ENCODE measurements at regions of chr7 and their contacts with region 1.

Region 1: GRCh38 chr7:37495574-37496184 is 47.0 kb upstream of the ELMO1 start:
- DNase-seq: no peak
- H3K4me3 ChIP-seq: no peak overlapping the region
- H3K27ac ChIP-seq: no peak overlapping the region
- H3K4me1 ChIP-seq: peaks cover 0 to 2% (median 0%) of the 10 kb centered on the region in 4 experiments; a peak in 3 of 7 replicates
- H3K27me3 ChIP-seq: no peaks in the 10 kb centered on the region
- CTCF ChIP-seq: peak in 2 of 3 experiments; percentile 29 to 49; a peak in 2 of 4 replicates
- EP300 ChIP-seq: no peak
- POLR2A ChIP-seq: no peak
- RAD21 ChIP-seq: peak; percentile 27 to 36; a peak in 2 of 4 replicates

Region 2: GRCh38 chr7:37255327-37255944 is 240.2 kb before region 1 on chr7:
- CTCF ChIA-PET with region 1: interaction called, 13 read pairs
- POLR2A ChIA-PET with region 1: no interaction called
- DNase-seq: no peak
- H3K4me3 ChIP-seq: no peak overlapping the region
- H3K27ac ChIP-seq: no peak overlapping the region
- H3K4me1 ChIP-seq: peaks cover 2 to 8% (median 6%) of the 10 kb centered on the region in 4 experiments; a peak in 5 of 7 replicates
- H3K27me3 ChIP-seq: no peaks in the 10 kb centered on the region
- CTCF ChIP-seq: no peak
- EP300 ChIP-seq: no peak
- POLR2A ChIP-seq: no peak
- RAD21 ChIP-seq: no peak; a peak in 1 of 4 replicates

Region 3: GRCh38 chr7:37284805-37285231 is 210.9 kb before region 1 on chr7:
- CTCF ChIA-PET with region 1: interaction called, 27 read pairs
- POLR2A ChIA-PET with region 1: no interaction called
- DNase-seq: peak; percentile 23 to 85
- H3K4me3 ChIP-seq: no peak overlapping the region
- H3K27ac ChIP-seq: no peak overlapping the region
- H3K4me1 ChIP-seq: peaks cover 0 to 16% (median 3%) of the 10 kb centered on the region in 4 experiments; a peak in 5 of 7 replicates
- H3K27me3 ChIP-seq: no peaks in the 10 kb centered on the region
- CTCF ChIP-seq: peak; percentile 80 to 90 (median 86)
- EP300 ChIP-seq: no peak; a peak in 1 of 3 replicates
- POLR2A ChIP-seq: no peak
- RAD21 ChIP-seq: peak; percentile 91 to 92

Region 4: GRCh38 chr7:37448636-37449361 is 46.9 kb before region 1 on chr7 and contains the start of gene ELMO1:
- CTCF ChIA-PET with region 1: interaction called, 55 read pairs
- POLR2A ChIA-PET with region 1: interaction called, 19 read pairs
- DNase-seq: peak; percentile 70 to 81
- H3K4me3 ChIP-seq: peak within 1 kb of the TSS; percentile 70 to 93 (median 74)
- H3K27ac ChIP-seq: no peak within 1 kb of the TSS
- H3K4me1 ChIP-seq: peaks cover 0 to 15% (median 3%) of the 10 kb centered on the region in 4 experiments; a peak in 4 of 7 replicates
- H3K27me3 ChIP-seq: no peaks in the 10 kb centered on the region; a peak in 2 of 7 replicates
- CTCF ChIP-seq: peak; percentile 59 to 60 (median 59)
- EP300 ChIP-seq: no peak
- POLR2A ChIP-seq: peak in 1 of 2 experiments; percentile 75; a peak in 2 of 3 replicates
- RAD21 ChIP-seq: peak; percentile 42 to 57
- total RNA-seq, gene ELMO1: 18.4 and 20.6 TPM in 2 replicates

Region 5: GRCh38 chr7:37531225-37531624 is 35.5 kb after region 1 on chr7:
- CTCF ChIA-PET with region 1: interaction called, 11 read pairs
- POLR2A ChIA-PET with region 1: no interaction called
- DNase-seq: no peak
- H3K4me3 ChIP-seq: no peak overlapping the region
- H3K27ac ChIP-seq: no peak overlapping the region
- H3K4me1 ChIP-seq: peaks cover 0 to 4% (median 0%) of the 10 kb centered on the region in 4 experiments; a peak in 3 of 7 replicates
- H3K27me3 ChIP-seq: no peaks in the 10 kb centered on the region
- CTCF ChIP-seq: no peak
- EP300 ChIP-seq: no peak
- POLR2A ChIP-seq: no peak
- RAD21 ChIP-seq: no peak

Measured in H1 (cell line).